CD4-positive, alpha-beta memory T cell (primary cell): ENCODE measurements at regions of chr5 and their contacts with region 1.

Region 1: DNA sequence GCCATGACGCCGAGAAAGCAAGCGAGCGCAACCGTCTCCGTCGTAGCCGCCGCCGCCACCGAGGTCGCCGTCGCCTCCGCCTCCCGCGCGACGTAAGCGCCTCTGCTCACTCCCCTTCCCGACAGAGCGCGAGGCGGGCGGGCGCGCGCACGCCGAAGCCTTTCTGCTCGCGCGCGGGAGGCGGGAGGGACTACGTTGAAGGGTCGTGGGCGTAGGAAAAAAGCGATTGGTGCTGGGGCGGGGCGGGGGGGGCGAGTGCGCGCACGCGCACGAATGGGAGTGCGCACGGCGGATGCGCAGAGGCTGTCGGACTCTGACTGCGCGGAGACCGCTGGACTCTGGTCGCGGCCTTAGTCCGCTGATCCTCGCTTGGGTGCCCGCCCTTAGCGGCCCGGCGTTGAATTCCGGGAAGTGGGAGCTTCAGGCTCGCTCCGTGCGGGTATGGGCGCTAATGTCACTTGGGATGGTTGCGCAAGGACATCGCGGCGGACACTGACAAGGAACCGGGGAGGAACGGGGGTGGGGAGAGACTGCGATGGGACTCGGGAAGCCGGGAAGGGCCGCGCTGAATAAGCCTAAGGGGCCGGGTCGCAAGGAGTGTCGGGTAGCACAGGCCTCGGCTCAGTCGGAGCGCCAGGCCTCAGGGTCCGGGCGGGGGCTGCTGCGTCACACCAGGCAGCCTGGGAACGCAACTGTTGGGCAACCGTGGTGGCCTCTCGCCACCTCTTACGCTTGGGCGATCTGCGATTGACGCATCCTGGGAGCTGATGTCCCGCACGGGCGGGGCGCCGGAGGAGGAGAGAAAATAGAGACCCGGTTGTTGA is at the start of gene CHD1:
- DNase-seq: peak; percentile 94 to 99 (median 98)
- H3K4me3 ChIP-seq: peak within 1 kb of the TSS; percentile 48 to 84
- H3K4me3 Mint-ChIP-seq: peak within 1 kb of the TSS; percentile 93 to 99 (median 98)
- H3K27ac ChIP-seq: peak within 1 kb of the TSS; percentile 100
- H3K27ac Mint-ChIP-seq: peak within 1 kb of the TSS; percentile 99 to 100 (median 100)
- H3K4me1 ChIP-seq: peaks cover 72% of the 10 kb centered on the region
- H3K4me1 Mint-ChIP-seq: peaks cover 45 to 90% (median 55%) of the 10 kb centered on the region in 4 donors
- H3K27me3 ChIP-seq: no peaks in the 10 kb centered on the region
- H3K27me3 Mint-ChIP-seq: no peaks in the 10 kb centered on the region
- total RNA-seq, gene CHD1: 91.2 to 93.9 TPM

Region 2: DNA sequence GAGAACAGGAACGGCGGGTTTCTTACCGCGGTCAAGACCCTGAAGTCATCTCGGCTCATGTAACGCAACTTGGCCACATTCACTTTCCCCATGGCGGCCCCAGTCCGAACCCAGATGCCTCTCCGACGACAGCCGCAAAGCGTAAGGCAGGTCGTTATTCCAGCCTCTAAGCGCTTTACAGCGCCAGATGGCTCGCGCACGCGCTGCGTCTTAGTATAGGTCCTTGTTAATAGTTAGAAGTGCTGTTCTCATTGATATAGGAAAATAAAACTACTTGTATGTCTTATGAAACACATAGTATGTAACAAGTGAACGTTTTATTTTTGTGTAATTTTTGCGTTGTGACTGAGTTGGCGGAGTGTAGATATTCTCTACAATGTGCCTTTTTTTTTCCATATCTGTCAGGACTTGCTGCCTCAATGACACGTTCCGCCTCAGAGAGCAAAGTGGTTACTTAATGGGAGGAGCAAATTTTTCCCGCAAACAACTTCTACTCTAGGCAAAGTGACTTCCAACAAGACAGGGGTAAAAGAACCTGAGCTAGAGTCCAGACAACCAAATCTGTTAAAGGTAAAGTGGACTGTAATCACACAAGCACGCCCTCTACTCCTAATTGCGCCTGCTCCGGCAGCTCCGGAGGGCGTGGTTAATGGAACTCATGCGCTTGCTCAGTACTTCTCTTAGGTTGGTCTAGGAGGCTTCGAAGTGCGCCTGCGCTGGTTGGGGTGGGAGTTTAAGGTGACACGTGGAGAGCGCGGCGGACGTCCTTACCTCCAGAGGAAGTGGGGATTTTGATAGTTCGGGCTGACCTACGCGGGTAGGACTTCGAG is 1745.8 kb before region 1 on chr5 and contains the start of gene RIOK2:
- CTCF ChIA-PET with region 1: interaction called, 3 read pairs
- POLR2A ChIA-PET with region 1: interaction called, 4 read pairs
- intact Hi-C with region 1: loop called (anchors 2 kb)
- DNase-seq: peak; percentile 91 to 94 (median 92)
- H3K4me3 ChIP-seq: peak within 1 kb of the TSS; percentile 77 to 87
- H3K4me3 Mint-ChIP-seq: peak within 1 kb of the TSS; percentile 94 to 99 (median 97)
- H3K27ac ChIP-seq: peak within 1 kb of the TSS; percentile 95
- H3K27ac Mint-ChIP-seq: peak within 1 kb of the TSS; percentile 99 to 100 (median 100)
- H3K4me1 ChIP-seq: peaks cover 29% of the 10 kb centered on the region
- H3K4me1 Mint-ChIP-seq: peaks cover 23 to 50% (median 38%) of the 10 kb centered on the region in 4 donors
- H3K27me3 ChIP-seq: no peaks in the 10 kb centered on the region
- H3K27me3 Mint-ChIP-seq: no peaks in the 10 kb centered on the region
- total RNA-seq, gene RIOK2: 38.2 to 40.8 TPM

Region 3: DNA sequence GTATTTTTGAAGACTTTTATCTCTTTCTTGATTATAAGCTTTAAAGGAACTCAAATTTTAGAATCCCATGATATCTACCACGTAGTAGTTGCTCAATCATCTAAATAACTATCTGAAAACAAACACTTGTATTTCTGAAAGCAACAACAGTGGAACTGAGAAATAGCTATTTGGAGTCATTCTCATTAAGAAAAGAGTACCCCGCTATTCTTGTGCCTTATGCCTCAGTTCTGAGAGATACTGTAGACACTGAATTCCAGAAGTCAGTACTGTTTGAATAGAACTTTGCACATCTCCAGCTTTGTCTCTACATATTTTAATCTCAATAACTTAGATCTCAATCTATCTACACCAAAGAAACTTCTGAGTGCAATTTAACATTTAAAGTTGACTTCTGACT is 11.7 kb before region 1 on chr5:
- CTCF ChIA-PET with region 1: interaction called, 4 read pairs
- POLR2A ChIA-PET with region 1: interaction called, 130 read pairs
- intact Hi-C with region 1: loop called (anchors 1 kb)
- DNase-seq: no peak
- H3K4me3 ChIP-seq: no peak overlapping the region
- H3K4me3 Mint-ChIP-seq: peak overlapping the region in 4 of 8 donors; percentile 3 to 39 (median 29)
- H3K27ac ChIP-seq: no peak overlapping the region
- H3K27ac Mint-ChIP-seq: peak overlapping the region in 3 of 7 donors; percentile 33 to 75 (median 53)
- H3K4me1 ChIP-seq: peaks cover 84% of the 10 kb centered on the region
- H3K4me1 Mint-ChIP-seq: peaks cover 52 to 91% (median 74%) of the 10 kb centered on the region in 4 donors
- H3K27me3 ChIP-seq: no peaks in the 10 kb centered on the region
- H3K27me3 Mint-ChIP-seq: no peaks in the 10 kb centered on the region

Region 4: DNA sequence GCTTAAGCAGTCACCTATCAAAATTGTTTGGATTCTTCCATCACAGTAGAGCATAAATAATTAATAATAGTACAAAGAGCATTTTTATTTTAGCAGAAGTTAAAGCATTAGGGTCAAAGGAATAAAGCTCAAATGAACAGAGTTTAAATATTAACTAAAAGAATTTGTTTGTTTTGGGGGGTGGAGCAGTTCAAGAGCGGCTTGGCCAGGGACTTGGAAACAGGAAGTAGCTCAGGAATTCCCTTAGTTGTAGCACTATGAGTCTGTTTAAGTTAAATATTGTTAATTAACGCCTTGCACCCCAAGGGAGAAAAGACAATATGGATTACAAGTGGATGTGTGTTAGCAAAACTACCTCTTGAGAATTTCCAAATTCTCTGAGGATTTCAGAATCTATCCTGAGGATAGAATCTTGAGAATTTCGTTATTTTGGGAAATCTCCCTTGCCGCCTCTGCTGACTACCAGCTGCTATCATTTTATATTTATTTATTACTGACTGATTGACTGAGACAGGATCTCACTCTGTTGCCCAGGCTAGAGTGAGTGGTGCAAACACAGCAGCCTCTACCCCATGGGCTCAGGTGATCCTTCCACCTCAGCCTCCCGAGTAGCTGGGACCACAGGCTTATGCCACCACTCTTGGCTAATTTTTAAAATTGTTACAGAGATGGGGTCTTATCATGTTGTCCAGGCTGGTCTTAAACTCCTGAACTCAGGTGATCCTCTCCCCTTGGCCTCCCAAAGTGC is 96.4 kb after region 1 on chr5:
- CTCF ChIA-PET with region 1: interaction called, 3 read pairs
- POLR2A ChIA-PET with region 1: interaction called, 60 read pairs
- intact Hi-C with region 1: no loop called
- DNase-seq: no peak
- H3K4me3 ChIP-seq: no peak overlapping the region
- H3K4me3 Mint-ChIP-seq: no peak overlapping the region
- H3K27ac ChIP-seq: no peak overlapping the region
- H3K27ac Mint-ChIP-seq: no peak overlapping the region
- H3K4me1 ChIP-seq: peaks cover 17% of the 10 kb centered on the region
- H3K4me1 Mint-ChIP-seq: peaks cover 21 to 38% (median 27%) of the 10 kb centered on the region in 4 donors
- H3K27me3 ChIP-seq: no peaks in the 10 kb centered on the region
- H3K27me3 Mint-ChIP-seq: no peaks in the 10 kb centered on the region

Region 5: GRCh38 chr5:99045871-99046270 is 116.8 kb after region 1 on chr5:
- CTCF ChIA-PET with region 1: interaction called, 3 read pairs
- POLR2A ChIA-PET with region 1: interaction called, 144 read pairs
- intact Hi-C with region 1: no loop called
- DNase-seq: no peak
- H3K4me3 ChIP-seq: no peak overlapping the region
- H3K4me3 Mint-ChIP-seq: peak overlapping the region in 2 of 8 donors; percentile 25 to 46
- H3K27ac ChIP-seq: no peak overlapping the region
- H3K27ac Mint-ChIP-seq: peak overlapping the region in 3 of 7 donors; percentile 22 to 73 (median 51)
- H3K4me1 ChIP-seq: peaks cover 14% of the 10 kb centered on the region
- H3K4me1 Mint-ChIP-seq: peaks cover 4 to 23% (median 12%) of the 10 kb centered on the region in 4 donors
- H3K27me3 ChIP-seq: no peaks in the 10 kb centered on the region
- H3K27me3 Mint-ChIP-seq: no peaks in the 10 kb centered on the region

Region 6: DNA sequence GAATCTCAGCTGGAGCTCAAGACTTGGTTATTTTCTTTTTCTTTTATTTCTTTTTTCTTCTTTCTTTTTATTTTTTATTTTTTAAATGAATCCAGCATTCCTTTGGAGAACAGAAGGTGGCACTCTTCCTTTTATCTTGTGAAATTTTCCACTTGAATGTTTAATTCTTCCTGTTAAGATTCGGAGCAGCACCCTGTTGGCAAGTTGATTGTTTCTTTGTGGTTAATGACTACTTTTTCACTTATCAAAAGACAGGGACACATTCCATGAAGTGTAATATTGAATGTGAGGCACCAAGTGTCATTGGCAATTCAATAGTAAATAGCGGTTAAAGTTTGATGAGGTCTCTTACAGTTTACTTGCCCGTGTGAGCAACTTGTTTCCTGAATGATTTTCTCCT is 240.2 kb after region 1 on chr5:
- CTCF ChIA-PET with region 1: no interaction called
- POLR2A ChIA-PET with region 1: no interaction called
- intact Hi-C with region 1: no loop called
- DNase-seq: no peak
- H3K4me3 ChIP-seq: no peak overlapping the region
- H3K4me3 Mint-ChIP-seq: no peak overlapping the region
- H3K27ac ChIP-seq: no peak overlapping the region
- H3K27ac Mint-ChIP-seq: no peak overlapping the region
- H3K4me1 ChIP-seq: no peaks in the 10 kb centered on the region
- H3K4me1 Mint-ChIP-seq: no peaks in the 10 kb centered on the region
- H3K27me3 ChIP-seq: no peaks in the 10 kb centered on the region
- H3K27me3 Mint-ChIP-seq: peaks cover 0 to 1% of the 10 kb centered on the region in 2 donors

Region 7: DNA sequence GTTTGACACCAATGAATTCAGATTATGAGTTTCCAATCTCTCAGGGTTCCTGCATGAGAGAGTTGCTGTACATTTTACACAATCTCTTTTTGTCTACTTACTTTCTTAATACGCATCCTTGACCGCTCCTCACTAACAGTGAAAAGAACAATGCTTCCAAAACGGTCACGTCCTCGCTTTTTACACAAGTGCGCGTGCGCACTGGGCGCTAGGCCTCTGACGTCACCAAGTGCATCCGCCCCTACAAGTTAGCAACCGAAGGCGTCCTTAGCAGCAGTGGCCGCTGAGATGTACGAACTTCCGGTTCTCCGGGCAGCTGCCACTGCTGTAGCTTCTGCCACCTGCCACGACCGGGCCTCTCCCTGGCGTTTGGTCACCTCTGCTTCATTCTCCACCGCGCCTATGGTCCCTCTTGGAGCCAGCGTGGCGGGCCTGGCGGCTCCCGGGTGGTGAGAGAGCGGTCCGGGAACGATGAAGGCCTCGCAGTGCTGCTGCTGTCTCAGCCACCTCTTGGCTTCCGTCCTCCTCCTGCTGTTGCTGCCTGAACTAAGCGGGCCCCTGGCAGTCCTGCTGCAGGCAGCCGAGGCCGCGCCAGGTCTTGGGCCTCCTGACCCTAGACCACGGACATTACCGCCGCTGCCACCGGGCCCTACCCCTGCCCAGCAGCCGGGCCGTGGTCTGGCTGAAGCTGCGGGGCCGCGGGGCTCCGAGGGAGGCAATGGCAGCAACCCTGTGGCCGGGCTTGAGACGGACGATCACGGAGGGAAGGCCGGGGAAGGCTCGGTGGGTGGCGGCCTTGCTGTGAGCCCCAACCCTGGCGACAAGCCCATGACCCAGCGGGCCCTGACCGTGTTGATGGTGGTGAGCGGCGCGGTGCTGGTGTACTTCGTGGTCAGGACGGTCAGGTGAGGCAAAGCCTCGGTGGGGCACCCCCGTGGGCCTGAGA is 1606.2 kb after region 1 on chr5 and contains the start of gene FAM174A:
- CTCF ChIA-PET with region 1: no interaction called
- POLR2A ChIA-PET with region 1: no interaction called
- intact Hi-C with region 1: loop called (anchors 10 kb)
- DNase-seq: peak; percentile 92 to 96 (median 95)
- H3K4me3 ChIP-seq: peak within 1 kb of the TSS; percentile 68 to 81
- H3K4me3 Mint-ChIP-seq: peak within 1 kb of the TSS; percentile 93 to 100 (median 97)
- H3K27ac ChIP-seq: peak within 1 kb of the TSS; percentile 89
- H3K27ac Mint-ChIP-seq: peak within 1 kb of the TSS; percentile 92 to 99 (median 98)
- H3K4me1 ChIP-seq: peaks cover 24% of the 10 kb centered on the region
- H3K4me1 Mint-ChIP-seq: peaks cover 23 to 33% (median 26%) of the 10 kb centered on the region in 4 donors
- H3K27me3 ChIP-seq: no peaks in the 10 kb centered on the region
- H3K27me3 Mint-ChIP-seq: peaks cover 0 to under 1% of the 10 kb centered on the region in 2 donors
- total RNA-seq, gene FAM174A: 5.1 to 6.7 TPM